Left cardiac atrium (tissue), 4 donors: ENCODE measurements at regions of chr2 and their contacts with region 1.

Region 1: GRCh38 chr2:19349911-19350677 is 8.3 kb downstream of the OSR1 start:
- DNase-seq: peak; percentile 67
- ATAC-seq: peak in 1 of 2 donors; percentile 12

Region 2: GRCh38 chr2:18883616-18884456 is 466.3 kb before region 1 on chr2:
- intact Hi-C with region 1: loop called in 1 of 2 experiments (anchors 10 kb)
- DNase-seq: no peak
- ATAC-seq: no peak

Region 3: GRCh38 chr2:18987592-18988073 is 362.5 kb before region 1 on chr2:
- intact Hi-C with region 1: loop called in 1 of 2 experiments (anchors 10 kb)
- DNase-seq: peak; percentile 81
- ATAC-seq: peak; percentile 55 to 60

Region 4: DNA sequence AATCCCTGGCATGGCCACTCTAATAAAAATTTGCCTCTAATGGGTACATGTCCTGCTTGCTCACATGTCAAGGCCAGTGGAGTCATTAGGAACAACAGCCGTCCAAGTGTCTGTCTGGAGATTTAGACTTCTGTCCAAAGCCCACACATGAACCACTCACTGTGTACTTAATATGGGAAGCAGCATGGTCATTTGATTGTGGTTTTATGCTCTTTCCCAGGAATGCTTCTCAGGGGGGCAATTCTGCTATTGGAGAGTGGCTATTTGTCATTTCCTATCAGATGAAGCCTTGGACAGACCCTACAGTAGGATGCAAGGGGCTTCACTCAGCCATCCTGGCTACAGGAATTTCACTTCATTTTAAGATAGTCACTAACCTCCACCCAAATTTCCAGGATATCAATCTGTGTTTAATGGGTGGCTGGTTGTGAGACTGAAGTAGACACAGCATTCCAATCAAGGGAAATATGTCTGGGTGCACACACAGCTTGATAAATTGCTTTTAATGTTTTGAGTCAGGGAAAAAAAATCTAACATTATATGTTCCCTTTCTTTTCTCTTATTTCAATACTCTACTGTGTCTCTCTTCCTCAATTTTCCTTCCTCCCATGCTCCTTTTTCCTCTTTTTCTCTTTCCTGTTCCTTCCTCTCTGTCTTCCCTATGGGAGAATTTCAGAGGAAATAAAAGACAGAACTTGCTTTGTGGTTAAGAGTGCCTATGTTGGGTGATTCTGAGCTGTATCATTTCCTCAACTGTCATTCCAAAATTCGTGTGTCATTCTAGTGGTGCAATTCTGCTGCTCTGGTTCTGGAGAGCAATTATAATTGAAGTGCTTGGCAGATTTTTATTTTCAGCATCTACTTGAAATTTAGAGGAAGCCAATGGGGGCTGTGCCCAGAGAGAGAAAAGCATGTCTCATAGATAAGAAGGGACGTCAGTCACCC is 311.8 kb before region 1 on chr2:
- intact Hi-C with region 1: loop called in 1 of 2 experiments (anchors 10 kb)
- DNase-seq: no peak
- ATAC-seq: peak; percentile 42 to 49

Region 5: GRCh38 chr2:19187323-19188020 is 162.6 kb before region 1 on chr2:
- intact Hi-C with region 1: no loop called
- DNase-seq: no peak
- ATAC-seq: peak in 1 of 2 donors; percentile 70

Region 6: DNA sequence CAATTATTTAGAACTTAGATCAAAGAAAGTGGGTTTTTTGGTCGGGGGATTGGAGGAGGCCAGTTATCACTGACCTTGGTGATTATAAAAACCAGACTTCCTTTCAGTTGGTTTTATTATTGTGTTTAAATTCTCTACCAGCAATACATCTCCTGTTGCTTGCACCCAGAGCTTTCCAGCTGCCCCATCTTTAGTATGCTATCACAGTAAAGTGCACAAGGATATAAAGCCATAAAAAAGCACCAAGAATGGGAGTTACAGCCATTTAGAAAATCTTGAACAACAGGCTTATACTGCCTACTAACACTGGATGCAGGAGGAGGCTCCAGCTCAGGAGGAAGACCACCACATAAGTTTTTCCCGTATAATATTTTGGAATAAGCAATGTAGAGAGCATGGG is 157.0 kb after region 1 on chr2:
- intact Hi-C with region 1: no loop called
- DNase-seq: no peak
- ATAC-seq: no peak